Sigmoid colon (tissue), 7 donors: ENCODE measurements at regions of chr3 and their contacts with region 1.

Region 1: DNA sequence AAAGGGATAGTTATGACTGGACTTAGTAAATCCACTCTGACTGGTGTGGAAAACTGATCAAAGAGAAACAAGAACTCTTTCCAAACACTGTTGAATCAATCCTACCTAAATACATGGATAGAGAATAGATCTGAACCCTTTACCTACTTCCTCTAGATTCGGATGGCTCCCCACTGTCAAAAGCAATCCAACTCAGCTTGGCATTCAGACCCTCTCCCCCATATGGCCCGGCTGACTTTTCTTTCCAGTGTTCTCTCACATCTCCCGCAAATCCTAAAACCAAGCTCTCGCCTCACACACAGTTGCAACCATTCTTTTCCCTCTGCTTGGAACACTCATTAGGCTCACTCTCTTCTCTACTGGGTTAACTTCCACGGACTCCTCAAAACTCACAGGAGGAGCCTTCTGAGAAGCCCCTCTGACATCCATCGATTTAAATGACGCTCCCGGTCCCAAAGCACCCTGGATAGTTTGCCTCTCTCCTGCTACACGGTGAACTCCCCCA is 639 bp downstream of the SPICE1 start:
- DNase-seq: no peak
- H3K4me3 ChIP-seq: peak overlapping the region; percentile 72 to 93 (median 88)
- H3K27ac ChIP-seq: peak overlapping the region; percentile 87 to 95 (median 92)
- H3K4me1 ChIP-seq: peaks cover 0 to 19% (median 16%) of the 10 kb centered on the region in 4 donors
- H3K27me3 ChIP-seq: no peaks in the 10 kb centered on the region
- CTCF ChIP-seq: no peak
- EP300 ChIP-seq: no peak
- POLR2A ChIP-seq: no peak

Region 2: DNA sequence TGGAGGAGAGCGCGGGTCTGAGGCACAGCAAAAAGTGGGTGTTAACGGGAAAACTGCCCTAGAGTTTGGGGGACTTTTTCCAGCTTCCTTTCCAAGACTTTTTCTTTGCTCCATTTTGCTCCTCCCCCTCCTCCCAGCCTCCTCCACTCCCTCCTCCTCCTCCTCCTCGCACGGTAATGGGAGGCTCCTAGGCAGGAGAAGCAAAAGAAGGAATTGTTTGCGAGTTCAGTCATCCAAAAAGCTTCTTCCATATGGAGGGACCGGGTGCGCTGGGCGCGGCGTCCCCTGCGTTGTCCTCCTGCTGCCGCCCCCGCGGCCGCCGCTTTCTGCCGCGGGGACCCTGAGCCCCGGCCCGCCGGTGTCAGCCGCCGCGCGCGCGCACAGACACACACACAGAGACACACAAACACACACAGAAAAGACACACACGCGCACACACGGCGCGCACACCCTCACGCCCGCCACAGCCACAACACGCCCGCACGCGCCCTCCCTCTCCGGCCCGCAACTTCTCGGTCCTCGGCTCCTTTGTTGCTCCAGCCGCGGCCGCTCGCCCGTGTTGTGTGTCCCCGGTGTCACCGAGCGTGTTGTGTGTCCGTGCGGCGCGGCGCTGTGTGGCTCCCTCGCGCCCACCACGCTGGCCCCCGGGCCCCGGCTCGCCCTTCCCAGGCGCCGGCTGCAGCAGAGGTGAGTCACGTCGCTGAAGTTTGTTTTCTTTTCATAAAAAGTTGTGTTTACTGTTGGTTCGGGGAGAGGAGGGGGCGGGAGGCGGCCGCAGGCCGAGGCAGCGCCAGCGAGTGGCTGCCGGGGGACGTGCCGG is 302.8 kb before region 1 on chr3 and contains the start of gene BOC:
- intact Hi-C with region 1: loop called (anchors 5 kb)
- DNase-seq: peak; percentile 77
- H3K4me3 ChIP-seq: peak within 1 kb of the TSS; percentile 73 to 97 (median 91)
- H3K27ac ChIP-seq: peak within 1 kb of the TSS; percentile 95 to 97 (median 96)
- H3K4me1 ChIP-seq: peaks cover 0 to 53% (median 25%) of the 10 kb centered on the region in 4 donors
- H3K27me3 ChIP-seq: no peaks in the 10 kb centered on the region
- CTCF ChIP-seq: no peak
- EP300 ChIP-seq: no peak
- POLR2A ChIP-seq: no peak
- total RNA-seq, gene BOC: 80.3 to 122 (median 103) TPM

Region 3: GRCh38 chr3:113606539-113607218 is 92.4 kb after region 1 on chr3:
- intact Hi-C with region 1: no loop called
- DNase-seq: no peak
- H3K4me3 ChIP-seq: no peak overlapping the region
- H3K27ac ChIP-seq: no peak overlapping the region
- H3K4me1 ChIP-seq: no peaks in the 10 kb centered on the region
- H3K27me3 ChIP-seq: no peaks in the 10 kb centered on the region
- CTCF ChIP-seq: no peak
- EP300 ChIP-seq: no peak
- POLR2A ChIP-seq: no peak

Region 4: GRCh38 chr3:113696658-113697499 is 182.6 kb after region 1 on chr3:
- intact Hi-C with region 1: loop called (anchors 5 kb)
- DNase-seq: peak; percentile 100
- H3K4me3 ChIP-seq: peak overlapping the region; percentile 91 to 100 (median 98)
- H3K27ac ChIP-seq: peak overlapping the region; percentile 99 to 100 (median 100)
- H3K4me1 ChIP-seq: peaks cover 0 to 39% (median 27%) of the 10 kb centered on the region in 4 donors
- H3K27me3 ChIP-seq: no peaks in the 10 kb centered on the region
- CTCF ChIP-seq: no peak
- EP300 ChIP-seq: no peak
- POLR2A ChIP-seq: no peak